ENCODE measurements at regions of chr5 and their contacts with region 1.

Region 1: DNA sequence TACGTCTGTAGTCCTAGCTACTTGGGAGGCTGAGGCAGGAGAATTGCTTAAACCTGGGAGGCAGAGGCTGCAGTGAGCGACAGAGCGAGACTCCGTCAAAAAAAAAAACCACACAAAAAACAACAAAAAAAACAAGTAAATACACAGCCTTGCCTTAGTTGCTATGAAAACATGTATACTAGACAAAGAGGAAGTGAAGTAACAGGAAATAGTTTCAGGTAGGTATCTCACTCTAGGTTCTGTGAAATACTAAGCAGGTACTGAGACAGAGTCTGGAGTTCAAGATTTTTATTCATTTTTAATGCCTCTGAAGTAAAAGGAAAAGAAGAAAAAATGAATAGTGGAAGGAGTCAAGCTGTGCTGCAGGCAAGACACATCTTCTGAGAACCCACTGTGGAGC is 687.9 kb upstream of the RGMB start:
- DNase-seq: no peak
- H3K4me3 ChIP-seq: no peak overlapping the region
- H3K27ac ChIP-seq: no peak overlapping the region
- H3K4me1 ChIP-seq: no peaks in the 10 kb centered on the region
- H3K27me3 ChIP-seq: no peaks in the 10 kb centered on the region
- CTCF ChIP-seq: no peak

Region 2: DNA sequence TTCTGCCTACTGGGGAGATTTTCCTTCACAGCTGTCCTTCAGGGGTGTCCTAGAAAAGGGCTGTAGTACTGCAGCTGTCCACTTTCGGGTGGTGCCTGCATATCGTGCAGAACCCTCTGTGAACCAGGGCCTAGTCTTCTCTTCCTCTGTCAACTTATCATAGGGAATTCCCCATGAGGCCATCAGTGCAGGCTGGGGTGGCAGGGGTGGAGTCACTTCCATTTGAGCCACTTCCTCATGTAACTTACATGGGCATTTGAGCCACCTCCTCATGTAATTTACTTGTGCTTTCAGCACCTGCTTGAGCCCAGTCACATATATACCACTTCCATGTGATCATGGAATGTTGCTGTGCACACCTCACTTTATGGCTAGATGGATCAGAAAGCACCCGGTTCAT is 54.1 kb before region 1 on chr5:
- CTCF ChIA-PET with region 1: no interaction called
- POLR2A ChIA-PET with region 1: no interaction called
- intact Hi-C with region 1: no loop called
- DNase-seq: no peak
- H3K4me3 ChIP-seq: no peak overlapping the region
- H3K27ac ChIP-seq: no peak overlapping the region
- H3K4me1 ChIP-seq: no peaks in the 10 kb centered on the region
- H3K27me3 ChIP-seq: no peaks in the 10 kb centered on the region
- CTCF ChIP-seq: no peak

Region 3: GRCh38 chr5:98072921-98073320 is 12.7 kb before region 1 on chr5:
- CTCF ChIA-PET with region 1: no interaction called
- POLR2A ChIA-PET with region 1: no interaction called
- intact Hi-C with region 1: loop called (anchors 1 kb)
- DNase-seq: no peak
- H3K4me3 ChIP-seq: no peak overlapping the region
- H3K27ac ChIP-seq: no peak overlapping the region
- H3K4me1 ChIP-seq: no peaks in the 10 kb centered on the region
- H3K27me3 ChIP-seq: no peaks in the 10 kb centered on the region
- CTCF ChIP-seq: no peak

Measured in PC-9 (cell line).